GM10248 (cell line): ENCODE measurements at regions of chr14 and their contacts with region 1.

Region 1: DNA sequence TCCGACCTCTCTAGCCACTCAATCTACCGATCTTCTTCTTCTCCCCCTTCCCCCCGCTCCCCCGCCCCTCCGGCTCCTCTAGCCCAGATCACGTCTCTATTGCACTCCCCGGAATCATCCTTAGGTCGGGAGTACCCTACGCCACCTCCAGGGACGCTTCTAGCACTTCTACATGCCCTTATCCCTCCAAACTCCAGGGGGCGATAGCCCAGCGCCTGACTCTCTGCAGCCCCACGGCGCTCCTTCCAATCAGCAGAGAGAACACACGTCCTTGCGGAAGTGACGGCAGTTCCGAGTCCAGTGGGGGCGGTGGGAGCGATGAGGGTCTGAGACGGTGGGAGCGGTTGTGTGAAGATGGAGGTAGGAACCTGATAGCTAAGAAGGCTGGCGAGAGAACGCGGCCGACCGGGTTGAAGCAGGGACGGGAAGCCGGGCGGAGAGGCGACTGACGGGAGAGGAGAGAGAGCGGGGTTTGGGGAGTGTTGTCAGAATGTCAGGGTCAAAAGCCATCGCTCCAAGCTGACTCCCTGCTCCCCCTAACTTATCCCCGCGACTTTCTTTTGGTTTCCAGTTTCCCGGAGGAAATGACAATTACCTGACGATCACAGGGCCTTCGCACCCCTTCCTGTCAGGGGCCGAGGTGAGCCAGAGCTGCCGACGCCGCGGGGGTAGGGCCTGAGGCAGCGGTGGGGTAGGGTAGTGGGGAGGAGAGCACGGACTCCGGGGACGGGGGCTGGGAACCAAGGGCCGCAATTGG is at the starts of genes RAB2B and TOX4:
- DNase-seq: peak; percentile 95
- CTCF ChIP-seq: peak; percentile 93

Region 2: GRCh38 chr14:21437063-21437901 is 39.8 kb before region 1 on chr14:
- CTCF ChIA-PET with region 1: interaction called, 21 read pairs
- POLR2A ChIA-PET with region 1: no interaction called
- DNase-seq: peak; percentile 95
- CTCF ChIP-seq: no peak

Region 3: GRCh38 chr14:21455911-21456667 is 21.0 kb before region 1 on chr14 and contains the start of gene CHD8:
- CTCF ChIA-PET with region 1: interaction called, 23 read pairs
- POLR2A ChIA-PET with region 1: no interaction called
- DNase-seq: peak; percentile 98
- CTCF ChIP-seq: peak; percentile 73

Region 4: DNA sequence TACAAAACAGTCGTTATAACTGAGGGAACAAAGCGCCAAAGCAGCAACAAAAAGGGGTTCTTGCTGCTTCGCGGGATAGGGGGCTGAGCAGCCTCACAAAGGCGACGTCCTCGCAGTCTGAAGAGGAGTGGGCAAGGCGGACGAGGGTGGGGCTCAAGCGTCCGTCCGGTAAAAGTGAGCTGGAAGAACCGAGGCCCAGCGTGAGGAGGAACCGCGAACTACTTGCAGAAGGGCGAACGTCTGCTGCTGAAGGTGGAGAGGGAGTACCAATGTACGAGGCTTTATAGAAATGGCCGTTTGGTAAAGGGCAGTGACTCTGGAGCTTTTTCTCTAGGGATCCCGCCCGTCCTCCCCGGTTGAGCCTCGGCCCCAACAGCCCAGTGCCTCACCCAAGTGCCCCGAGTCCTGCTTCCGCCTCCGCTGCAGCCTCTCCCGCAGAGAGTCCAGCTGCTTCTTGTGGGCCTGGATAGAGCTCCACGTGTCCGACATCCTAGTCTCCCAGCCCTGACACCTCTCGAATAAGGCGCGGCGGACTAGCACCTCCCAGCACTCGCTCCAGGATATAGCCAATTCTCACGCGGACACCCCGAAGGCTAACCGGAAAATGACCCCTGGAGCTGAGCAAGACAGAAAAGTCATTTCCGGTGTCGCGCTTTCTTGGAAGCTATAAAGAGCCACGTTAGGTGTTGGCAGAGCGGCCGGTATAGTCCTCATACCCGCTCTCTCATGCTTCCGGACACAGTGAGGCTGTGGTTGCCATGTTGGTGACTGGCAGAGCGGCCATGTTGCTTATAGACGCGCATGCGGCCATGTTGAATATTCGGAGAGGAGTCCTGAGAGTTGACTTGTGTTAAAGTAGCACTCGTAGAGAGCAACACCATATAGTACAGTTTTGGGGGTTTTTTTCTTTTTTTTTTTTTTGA is 33.9 kb after region 1 on chr14 and contains the start of gene METTL3:
- CTCF ChIA-PET with region 1: interaction called, 10 read pairs
- POLR2A ChIA-PET with region 1: interaction called, 4 read pairs
- DNase-seq: peak; percentile 92
- CTCF ChIP-seq: no peak